ACHN (cell line): ENCODE measurements at regions of chr2 and their contacts with region 1.

Region 1: GRCh38 chr2:231411831-231412617 is 16.5 kb downstream of the B3GNT7 start:
- DNase-seq: peak; percentile 91

Region 2: DNA sequence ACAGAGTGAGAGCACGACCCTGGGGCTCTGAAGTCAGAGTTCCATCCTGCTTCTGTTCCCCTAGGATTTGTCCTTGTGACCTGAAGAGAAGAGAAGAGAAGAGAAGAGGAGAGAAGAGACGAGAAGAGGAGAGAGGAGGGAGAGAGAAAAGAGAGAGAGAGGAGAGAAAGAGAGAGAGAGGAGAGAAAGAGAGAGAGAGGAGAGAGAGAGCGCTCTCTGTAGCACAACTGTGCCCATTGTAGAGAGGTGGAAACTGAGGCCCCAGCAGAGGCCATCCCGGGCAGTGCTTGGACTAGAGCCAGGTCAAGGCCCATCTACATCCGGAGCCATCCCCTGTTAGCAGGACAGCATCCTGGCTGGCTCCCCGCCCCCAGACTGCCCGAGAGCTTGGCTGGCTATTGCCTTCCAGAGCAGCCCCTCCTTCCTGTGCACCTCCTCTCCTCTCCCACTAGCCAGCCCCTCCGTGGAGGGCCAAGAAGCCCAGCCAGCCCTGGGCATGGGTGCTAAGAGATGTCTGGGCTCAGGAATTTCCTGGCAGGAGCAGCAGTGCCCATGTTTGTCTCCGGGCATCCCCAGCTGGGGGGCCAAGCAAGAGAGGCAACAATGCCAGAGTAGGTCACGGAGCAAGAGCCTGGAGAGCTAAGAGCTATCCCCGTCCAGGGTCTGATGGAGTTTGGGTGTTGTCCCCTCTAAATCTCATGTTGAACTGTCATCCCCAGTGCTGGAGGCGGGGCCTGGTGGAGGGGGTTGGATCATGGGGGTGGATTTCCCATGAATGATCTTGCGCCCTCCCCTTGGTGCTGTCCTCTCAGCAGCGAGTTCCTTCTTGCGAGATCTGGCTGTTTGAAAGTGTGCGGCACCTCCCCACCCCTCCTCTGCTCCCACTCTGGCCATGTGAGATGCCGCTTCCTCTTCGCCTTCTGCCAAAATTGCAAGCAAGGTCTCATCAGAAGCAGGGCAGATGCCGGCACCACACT is 468.8 kb before region 1 on chr2:
- in situ Hi-C with region 1: no loop called
- DNase-seq: no peak

Region 3: GRCh38 chr2:231222318-231223055 is 189.5 kb before region 1 on chr2:
- in situ Hi-C with region 1: loop called (anchors 25 kb)
- DNase-seq: no peak

Region 4: DNA sequence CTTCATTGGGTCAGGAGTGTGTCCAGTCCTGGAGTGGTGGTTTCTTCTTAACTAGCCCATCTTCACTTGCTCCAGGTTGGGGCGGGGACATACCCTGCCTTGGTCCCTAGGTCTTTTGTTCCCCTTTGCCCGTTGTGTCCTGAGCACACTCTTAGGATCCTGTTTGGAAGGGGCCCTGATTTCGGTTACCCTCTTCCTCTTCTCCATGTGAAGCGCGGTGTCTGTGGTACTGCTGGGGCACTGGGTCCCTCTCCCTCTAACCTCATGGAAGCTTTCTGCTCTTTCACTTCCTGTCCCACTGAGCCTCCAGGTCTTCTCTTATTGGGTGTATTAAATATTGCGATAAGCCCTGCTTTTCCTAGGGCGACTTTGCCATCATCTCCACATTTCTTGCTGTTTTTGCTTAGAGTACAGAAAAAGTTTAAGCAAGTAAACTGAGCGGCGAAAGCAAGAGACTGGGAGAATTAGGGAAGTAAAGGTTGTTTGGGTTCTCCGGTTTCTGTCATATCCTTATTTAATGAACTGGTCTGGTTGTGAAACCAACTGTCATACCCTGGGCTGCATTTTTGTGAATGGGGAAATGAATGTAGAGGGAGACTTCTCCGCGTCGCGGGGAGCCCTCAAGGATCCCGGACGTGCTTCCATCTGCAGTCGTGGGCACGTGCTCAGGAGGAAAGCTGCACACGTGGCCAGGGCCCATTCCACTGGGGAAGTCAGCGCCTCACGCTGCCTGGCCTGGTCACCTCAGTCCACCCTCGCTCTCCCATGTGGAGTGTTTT is 90.3 kb before region 1 on chr2:
- in situ Hi-C with region 1: loop called (anchors 10 kb)
- DNase-seq: no peak